ENCODE measurements at regions of chr14 and their contacts with region 1.

Region 1: DNA sequence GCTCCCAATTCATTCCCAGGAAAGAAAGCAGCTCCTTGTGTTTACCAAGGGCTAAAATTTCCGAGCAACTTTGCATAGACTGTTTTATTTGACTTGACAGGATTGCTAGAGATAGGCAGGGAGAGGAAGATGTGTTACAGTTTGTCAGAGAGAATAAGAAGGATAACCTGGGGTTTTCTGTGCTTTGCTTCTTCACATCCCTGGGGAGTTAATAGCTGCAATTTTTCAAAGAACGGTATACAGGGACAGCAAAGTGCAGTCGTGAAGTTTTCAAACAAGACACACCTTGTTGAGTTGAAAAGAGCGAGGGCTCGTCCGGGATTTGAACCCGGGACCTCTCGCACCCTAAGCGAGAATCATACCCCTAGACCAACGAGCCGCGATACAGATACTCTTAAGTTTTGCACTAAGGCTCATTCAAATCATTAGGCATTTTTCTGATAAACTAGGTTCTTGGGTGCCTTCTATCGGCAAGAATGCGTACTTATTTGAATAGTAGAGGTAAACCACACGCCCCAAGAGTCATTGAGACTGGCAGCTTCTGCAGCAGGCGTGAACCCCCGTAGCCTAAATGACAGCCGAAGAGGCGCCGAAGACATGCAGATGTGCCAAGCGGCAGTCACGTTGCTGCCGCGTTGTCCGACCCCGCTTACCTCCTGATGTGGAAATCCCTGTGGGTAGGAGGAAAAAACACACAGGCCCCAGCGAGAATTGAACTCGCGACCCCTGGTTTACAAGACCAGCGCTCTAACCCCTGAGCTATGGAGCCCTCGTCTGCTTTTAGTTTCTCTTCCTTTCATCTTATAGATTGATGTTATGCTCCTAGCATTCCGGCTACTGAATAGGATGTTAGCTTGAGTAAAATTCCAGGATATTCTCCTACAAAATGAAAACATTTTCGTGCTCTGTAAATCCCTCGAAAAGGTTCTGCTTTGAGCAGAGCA is 22.2 kb upstream of the RNASE12 start:
- DNase-seq: peak; percentile 84
- H3K4me3 Mint-ChIP-seq: no peak overlapping the region
- H3K27ac Mint-ChIP-seq: no peak overlapping the region
- H3K4me1 Mint-ChIP-seq: peaks cover 10% of the 10 kb centered on the region
- H3K27me3 Mint-ChIP-seq: peaks cover 2% of the 10 kb centered on the region

Region 2: GRCh38 chr14:20327005-20327869 is 286.1 kb before region 1 on chr14:
- CTCF ChIA-PET with region 1: interaction called, 74 read pairs
- DNase-seq: no peak
- H3K4me3 Mint-ChIP-seq: no peak overlapping the region
- H3K27ac Mint-ChIP-seq: peak overlapping the region; percentile 17
- H3K4me1 Mint-ChIP-seq: peaks cover 39% of the 10 kb centered on the region
- H3K27me3 Mint-ChIP-seq: no peaks in the 10 kb centered on the region

Region 3: DNA sequence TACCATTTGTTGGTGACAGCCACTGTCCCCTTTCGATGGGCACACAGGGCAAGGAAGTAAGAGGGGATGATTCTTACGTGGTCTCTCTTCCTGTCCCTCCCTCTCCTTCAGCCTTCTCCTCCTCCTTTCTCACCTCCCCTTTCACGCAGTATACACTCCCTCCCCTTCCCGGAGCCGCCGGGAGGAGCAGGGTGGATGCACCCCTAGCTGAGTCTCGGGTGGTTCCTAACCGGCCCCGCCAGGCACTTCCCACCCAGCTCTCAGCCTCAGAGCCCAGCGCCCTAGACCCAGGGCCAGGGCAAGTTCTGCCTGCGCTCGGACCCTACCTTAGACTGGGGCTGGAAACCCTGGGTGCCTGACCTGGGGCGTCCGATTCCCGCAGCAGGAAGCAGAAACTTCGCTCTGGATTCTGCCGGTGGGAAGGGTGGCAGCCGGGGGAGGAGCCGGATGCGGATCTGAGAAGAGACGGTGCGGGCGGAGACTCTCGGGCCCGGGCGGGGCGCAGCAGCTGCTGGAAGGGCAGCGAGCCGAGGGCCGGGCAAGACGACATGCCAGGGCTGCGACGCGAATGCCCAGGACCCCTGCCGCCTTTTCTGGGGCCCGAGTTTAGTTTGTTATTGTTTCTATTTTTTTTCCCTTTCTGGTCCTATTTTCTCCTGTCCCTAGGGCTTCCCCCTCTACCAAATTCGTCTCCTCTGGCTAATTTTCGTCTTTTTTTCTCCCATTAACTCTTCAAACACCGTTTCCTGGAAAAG is 200.1 kb before region 1 on chr14 and contains the start of gene TEP1:
- CTCF ChIA-PET with region 1: interaction called, 47 read pairs
- DNase-seq: peak; percentile 85
- H3K4me3 Mint-ChIP-seq: peak within 1 kb of the TSS; percentile 94
- H3K27ac Mint-ChIP-seq: peak within 1 kb of the TSS; percentile 90
- H3K4me1 Mint-ChIP-seq: peaks cover 48% of the 10 kb centered on the region
- H3K27me3 Mint-ChIP-seq: no peaks in the 10 kb centered on the region

Region 4: DNA sequence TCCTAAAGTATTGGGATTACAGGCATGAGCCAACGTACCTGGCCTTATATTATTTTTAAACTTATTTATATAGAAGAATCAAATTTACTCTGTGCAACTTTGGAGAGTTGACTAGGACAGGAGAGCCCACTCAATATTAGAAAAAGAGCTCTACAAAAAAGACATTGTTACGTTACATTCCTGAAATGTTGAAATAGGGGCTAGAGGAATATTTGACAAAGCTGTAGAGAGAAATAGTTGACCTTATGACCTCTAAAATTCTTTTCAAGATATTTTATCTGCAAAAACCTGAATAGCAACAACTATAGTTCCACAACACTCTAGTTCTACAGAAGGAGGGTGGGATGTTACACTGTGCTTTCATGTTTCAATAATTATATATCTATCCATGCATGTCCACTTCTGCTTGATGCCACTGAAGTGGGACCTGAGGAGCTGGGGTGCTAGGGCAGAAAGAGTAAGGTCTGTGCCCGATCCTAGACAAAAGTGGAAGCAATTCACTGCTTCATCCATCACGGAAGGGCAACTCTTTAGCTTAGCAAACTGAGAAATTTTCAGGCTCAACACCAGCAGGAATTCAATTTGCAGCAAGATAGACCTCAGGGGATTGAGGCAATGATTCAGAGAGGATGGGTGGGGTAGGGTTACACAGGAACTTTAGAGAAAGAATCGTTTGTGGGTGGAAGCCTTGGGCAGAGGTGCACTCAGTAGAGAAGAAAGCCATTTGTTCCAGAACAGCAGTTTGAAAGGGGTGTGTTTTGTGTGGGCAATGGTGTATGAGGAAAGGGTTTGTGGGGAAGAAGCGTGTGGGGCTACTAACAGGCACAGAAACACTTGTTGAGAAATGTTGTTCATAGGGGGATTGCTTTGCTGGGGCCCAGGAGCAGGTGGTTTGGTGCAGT is 124.0 kb before region 1 on chr14:
- CTCF ChIA-PET with region 1: interaction called, 11 read pairs
- DNase-seq: peak; percentile 42
- H3K4me3 Mint-ChIP-seq: peak overlapping the region; percentile 16
- H3K27ac Mint-ChIP-seq: peak overlapping the region; percentile 81
- H3K4me1 Mint-ChIP-seq: peaks cover 68% of the 10 kb centered on the region
- H3K27me3 Mint-ChIP-seq: no peaks in the 10 kb centered on the region

Region 5: GRCh38 chr14:20587489-20588154 is 25.7 kb before region 1 on chr14 and contains the start of gene RNASE11:
- CTCF ChIA-PET with region 1: no interaction called
- DNase-seq: no peak
- H3K4me3 Mint-ChIP-seq: no peak within 1 kb of the TSS
- H3K27ac Mint-ChIP-seq: no peak within 1 kb of the TSS
- H3K4me1 Mint-ChIP-seq: peaks cover 3% of the 10 kb centered on the region
- H3K27me3 Mint-ChIP-seq: peaks cover 14% of the 10 kb centered on the region

Region 6: DNA sequence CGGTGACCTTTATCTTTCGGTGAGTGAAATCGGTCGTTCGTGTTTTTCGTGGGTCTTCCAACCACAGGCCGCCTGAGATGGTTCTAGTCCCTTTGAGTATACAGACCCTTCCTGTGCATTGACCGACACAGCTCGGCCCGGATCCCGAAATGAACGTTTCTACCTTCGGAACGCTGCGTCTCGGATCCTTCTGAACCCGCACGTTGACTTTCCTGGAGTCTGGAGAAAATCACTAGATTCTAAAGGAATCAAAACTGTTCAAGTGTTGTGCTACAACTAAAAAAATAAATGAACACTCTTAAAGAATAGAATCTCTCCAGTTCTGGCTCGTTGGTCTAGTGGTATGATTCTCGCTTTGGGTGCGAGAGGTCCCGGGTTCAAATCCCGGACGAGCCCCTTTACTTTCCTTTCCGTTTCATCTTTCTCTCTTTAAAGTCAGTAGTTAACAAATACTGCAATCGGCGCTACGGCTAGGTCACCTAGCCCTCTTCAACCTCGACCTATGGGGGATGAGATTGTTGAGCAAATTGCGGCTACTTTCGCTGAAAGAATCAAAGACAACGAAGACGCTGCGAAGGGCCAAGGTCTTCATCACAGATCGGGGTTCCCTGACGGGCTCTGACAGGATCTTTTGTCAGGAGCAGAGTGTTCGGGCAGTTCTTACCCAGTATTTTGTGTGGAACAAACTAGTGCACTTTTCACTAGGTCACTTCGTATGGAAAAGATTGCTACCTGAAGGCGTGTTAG is 19.5 kb after region 1 on chr14:
- CTCF ChIA-PET with region 1: interaction called, 11 read pairs
- DNase-seq: peak; percentile 63
- H3K4me3 Mint-ChIP-seq: peak overlapping the region; percentile 69
- H3K27ac Mint-ChIP-seq: peak overlapping the region; percentile 81
- H3K4me1 Mint-ChIP-seq: peaks cover 33% of the 10 kb centered on the region
- H3K27me3 Mint-ChIP-seq: peaks cover 84% of the 10 kb centered on the region

Region 7: DNA sequence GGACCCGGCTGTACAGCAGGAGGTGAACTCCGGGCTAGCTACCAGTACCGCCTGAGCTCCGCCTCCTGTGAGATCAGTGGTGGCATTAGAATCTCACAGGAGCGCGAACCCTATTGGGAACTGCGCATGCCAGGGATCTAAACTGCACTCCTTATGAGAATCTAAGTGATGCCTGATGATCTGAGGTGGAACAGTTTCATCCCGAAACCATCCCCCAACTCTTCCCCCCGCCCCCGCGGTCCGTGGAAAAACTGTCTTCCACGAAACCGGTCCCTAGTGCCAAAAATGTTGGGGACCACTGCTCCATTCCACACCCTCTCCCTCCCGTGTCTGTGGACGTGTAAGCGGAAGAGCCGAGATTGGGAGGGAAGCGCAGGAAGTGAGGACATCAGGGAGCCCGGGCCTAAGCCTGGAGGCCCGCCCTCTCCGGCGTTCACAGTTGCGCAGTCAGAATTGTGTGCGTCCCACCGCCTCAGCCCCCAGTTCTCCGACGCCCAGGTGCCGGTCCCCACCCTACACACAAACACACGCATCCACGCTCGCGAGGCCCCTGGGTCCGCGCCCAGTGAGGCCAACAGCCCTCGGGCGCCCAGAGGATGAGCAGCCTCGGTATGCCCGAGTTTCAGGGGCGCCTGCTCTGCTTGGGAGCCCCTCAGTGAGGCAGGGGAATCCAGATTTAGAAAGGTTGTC is 69.2 kb after region 1 on chr14:
- CTCF ChIA-PET with region 1: interaction called, 13 read pairs
- DNase-seq: peak; percentile 78
- H3K4me3 Mint-ChIP-seq: no peak overlapping the region
- H3K27ac Mint-ChIP-seq: no peak overlapping the region
- H3K4me1 Mint-ChIP-seq: peaks cover 31% of the 10 kb centered on the region
- H3K27me3 Mint-ChIP-seq: peaks cover 8% of the 10 kb centered on the region

Region 8: GRCh38 chr14:20690848-20691523 is 77.6 kb after region 1 on chr14:
- CTCF ChIA-PET with region 1: interaction called, 24 read pairs
- DNase-seq: peak; percentile 54
- H3K4me3 Mint-ChIP-seq: no peak overlapping the region
- H3K27ac Mint-ChIP-seq: no peak overlapping the region
- H3K4me1 Mint-ChIP-seq: peaks cover 7% of the 10 kb centered on the region
- H3K27me3 Mint-ChIP-seq: peaks cover 3% of the 10 kb centered on the region

Measured in activated naive CD4-positive, alpha-beta T cell treated with anti-CD3 and anti-CD28 coated beads, Interleukin-2, amount 10 ng/mL, durations not matched to agents 7 days and 5 days (primary cell).